Dorsolateral prefrontal cortex (tissue), 120 donors: ENCODE measurements at regions of chr11 and their contacts with region 1.

Region 1: DNA sequence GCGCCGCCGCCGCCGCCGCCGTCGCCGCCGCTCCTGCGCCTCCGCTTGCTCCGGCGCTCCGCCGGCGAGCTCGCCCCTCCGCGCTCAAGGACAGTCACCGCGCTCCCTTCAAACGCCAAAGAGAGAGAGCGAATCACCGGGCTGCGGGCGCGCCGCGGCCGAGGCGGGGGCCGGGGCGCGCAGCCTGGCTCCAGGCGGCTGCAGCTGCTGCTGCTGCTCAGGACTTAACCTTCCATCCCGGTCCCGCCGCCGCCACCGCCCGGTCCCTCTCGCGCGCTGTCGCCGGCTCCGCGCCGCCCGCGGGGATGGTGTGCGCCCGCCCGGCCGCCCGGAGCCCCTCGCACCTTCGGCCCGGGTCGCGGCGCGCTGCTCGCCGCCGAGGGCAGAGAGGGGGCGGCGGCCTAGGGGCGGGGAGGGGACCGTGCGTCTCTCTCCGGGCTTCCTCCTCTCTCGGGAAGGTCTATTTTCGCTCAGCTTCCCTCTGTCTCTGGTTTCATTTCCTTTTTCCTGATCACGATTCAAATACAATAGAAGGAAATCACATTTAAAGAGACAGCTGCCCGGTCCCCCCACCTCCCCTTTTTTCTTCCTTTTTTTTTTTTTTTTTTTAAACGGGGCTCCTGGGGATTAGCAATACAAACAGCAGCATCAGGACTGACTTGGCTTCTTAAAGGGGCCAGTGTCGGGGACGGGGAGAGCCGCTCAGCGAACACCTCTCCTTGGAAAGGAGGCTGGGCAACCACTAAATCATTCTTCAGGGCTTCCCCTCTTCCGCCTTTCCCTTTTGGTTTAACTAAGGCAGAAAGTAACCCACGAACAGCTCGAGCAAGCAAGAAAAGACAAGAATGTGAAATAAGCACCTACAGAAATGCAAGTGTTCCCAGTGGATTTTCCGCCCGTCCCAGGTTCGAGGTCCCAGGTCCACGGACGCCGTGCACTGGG is 22.1 kb downstream of the LMO2 start:
- DNase-seq: peak in 2 of 10 donors; percentile 24 to 59
- H3K4me3 ChIP-seq: peak overlapping the region; percentile 33 to 79 (median 68)
- H3K27ac ChIP-seq: peak overlapping the region in 56 of 59 donors; percentile 0 to 94 (median 81)
- H3K27me3 ChIP-seq: peaks cover 0 to 10% (median 0%) of the 10 kb centered on the region in 45 donors
- CTCF ChIP-seq: no peak

Region 2: DNA sequence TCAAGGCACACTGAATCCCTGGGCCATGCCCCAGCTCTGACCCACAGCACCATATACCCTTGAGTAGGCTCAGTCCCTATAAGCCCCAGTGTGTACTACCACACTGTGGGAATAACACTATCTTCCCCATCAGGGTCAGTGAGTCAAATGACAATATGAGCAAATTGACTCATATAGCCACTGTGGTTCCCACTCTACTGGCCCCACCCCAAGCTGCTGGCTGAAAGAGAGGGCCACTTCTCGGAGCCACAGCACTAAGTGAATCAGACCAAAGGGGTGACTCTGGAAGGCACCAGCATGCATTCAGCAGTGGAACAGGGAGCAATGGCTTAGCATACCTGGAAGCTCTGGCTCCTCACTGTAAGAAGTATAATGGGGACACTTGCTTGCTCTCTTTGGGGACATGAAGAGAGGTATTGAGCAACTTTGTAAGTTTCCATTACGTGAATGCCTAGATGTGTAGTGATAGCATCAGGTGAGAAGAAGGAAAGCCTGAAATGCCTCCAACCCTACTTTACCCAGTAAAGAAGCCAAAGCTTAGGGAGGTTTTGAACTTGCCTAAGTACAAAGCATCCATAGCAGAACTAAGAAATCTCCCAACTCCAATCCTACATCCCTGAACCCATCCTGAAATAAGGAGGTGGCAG is 147.1 kb before region 1 on chr11:
- intact Hi-C with region 1: no loop called
- DNase-seq: no peak
- H3K4me3 ChIP-seq: peak overlapping the region in 1 of 59 donors; percentile 15
- H3K27ac ChIP-seq: peak overlapping the region in 52 of 59 donors; percentile 2 to 88 (median 65)
- H3K27me3 ChIP-seq: no peaks in the 10 kb centered on the region
- CTCF ChIP-seq: no peak

Region 3: DNA sequence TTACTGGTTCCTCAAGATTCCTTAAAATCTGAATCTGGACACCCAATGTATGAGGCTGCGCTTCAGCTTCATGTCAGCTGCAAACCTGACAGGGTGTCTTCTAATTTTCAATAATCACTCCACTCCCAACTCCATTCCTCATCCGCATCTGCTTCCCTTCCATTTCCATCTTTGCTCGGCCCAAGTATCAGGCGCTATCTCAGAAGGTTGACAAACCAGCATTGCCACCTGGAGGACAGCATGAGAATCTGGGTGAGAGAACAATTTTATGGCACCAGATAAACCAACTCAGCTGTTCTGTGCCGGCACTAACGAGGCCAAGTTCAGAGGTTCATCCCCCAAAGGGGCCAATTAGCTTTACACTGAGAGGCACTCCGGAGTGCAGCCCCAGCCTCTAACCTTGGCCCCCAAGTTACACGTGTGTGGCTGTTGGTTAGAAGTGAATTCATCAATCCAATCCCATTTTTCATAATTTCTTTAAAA is 101.3 kb after region 1 on chr11:
- intact Hi-C with region 1: loop called in 1 of 2 experiments (anchors 5 kb)
- DNase-seq: peak in 3 of 10 donors; percentile 18 to 41 (median 21)
- H3K4me3 ChIP-seq: no peak overlapping the region
- H3K27ac ChIP-seq: peak overlapping the region in 1 of 59 donors; percentile 3
- H3K27me3 ChIP-seq: no peaks in the 10 kb centered on the region
- CTCF ChIP-seq: peak; percentile 22 to 76 (median 56)

Region 4: GRCh38 chr11:34149786-34150185 is 280.0 kb after region 1 on chr11:
- intact Hi-C with region 1: loop called in 1 of 2 experiments (anchors 10 kb)
- DNase-seq: no peak
- H3K4me3 ChIP-seq: no peak overlapping the region
- H3K27ac ChIP-seq: no peak overlapping the region
- H3K27me3 ChIP-seq: no peaks in the 10 kb centered on the region
- CTCF ChIP-seq: peak in 21 of 56 donors; percentile 10 to 41 (median 21)